ENCODE measurements at regions of chr19 and their contacts with region 1.

Region 1: GRCh38 chr19:48468775-48469288 is 337 bp upstream of the CYTH2 start:
- DNase-seq: peak; percentile 100
- H3K4me3 ChIP-seq: peak overlapping the region; percentile 49 to 85 (median 74)
- H3K27ac ChIP-seq: peak overlapping the region; percentile 94
- H3K4me1 ChIP-seq: peaks cover 8% of the 10 kb centered on the region
- H3K27me3 ChIP-seq: no peaks in the 10 kb centered on the region
- CTCF ChIP-seq: no peak
- POLR2A ChIP-seq: no peak

Region 2: DNA sequence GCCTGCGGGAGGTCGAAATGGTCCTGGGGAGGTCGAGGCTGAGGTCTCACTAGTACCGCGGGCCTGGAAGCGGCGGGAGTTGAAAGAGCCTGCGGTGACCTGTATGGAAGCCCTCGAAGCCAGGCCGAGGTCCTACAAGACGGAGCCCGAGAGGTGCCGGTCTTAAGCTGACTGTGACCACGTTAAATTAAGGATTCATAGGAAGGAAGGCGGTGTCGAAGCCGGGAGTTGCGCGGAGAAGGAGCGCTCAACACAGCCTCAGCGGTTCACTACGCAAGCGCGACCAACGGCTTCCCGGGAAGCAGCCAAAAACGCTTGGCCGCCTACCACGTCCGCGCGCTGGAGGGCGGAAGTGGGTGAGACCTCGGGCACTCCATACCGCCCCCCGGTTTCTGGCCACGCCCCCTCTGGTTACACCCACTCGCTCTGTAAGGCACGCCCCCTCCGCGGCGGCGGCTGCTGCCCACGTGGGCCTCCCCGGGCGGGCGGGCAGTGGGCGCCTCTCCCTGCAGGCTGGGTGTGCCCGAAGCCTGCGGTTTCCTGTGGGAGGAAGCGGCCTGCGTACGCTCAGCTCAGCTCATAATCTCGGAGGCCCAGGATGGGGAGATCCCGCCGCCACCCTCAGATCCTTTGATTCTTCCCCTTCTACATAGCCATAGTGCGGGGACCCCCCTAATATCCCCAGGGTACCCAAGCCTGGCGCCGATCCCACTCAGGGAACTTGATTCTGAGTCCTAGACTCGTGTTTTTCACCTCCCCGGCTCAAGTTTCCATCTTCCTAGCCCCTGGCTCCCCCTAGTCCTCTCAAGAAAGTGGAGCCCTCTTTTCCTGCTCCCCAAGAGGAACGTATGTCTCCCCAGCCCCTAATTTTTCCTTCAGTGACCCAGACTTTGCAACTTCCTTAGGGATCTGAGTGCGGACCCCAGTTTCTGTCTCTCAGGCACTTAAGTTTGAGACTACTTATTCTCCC is 146.9 kb before region 1 on chr19:
- CTCF ChIA-PET with region 1: no interaction called
- POLR2A ChIA-PET with region 1: no interaction called
- dilution Hi-C with region 1: no loop called
- intact Hi-C with region 1: loop called (anchors 2 kb)
- DNase-seq: peak; percentile 98
- H3K4me3 ChIP-seq: peak overlapping the region in 2 of 3 experiments; percentile 38 to 40
- H3K27ac ChIP-seq: peak overlapping the region; percentile 97
- H3K4me1 ChIP-seq: peaks cover 27% of the 10 kb centered on the region
- H3K27me3 ChIP-seq: no peaks in the 10 kb centered on the region
- CTCF ChIP-seq: no peak
- POLR2A ChIP-seq: peak; percentile 82

Region 3: DNA sequence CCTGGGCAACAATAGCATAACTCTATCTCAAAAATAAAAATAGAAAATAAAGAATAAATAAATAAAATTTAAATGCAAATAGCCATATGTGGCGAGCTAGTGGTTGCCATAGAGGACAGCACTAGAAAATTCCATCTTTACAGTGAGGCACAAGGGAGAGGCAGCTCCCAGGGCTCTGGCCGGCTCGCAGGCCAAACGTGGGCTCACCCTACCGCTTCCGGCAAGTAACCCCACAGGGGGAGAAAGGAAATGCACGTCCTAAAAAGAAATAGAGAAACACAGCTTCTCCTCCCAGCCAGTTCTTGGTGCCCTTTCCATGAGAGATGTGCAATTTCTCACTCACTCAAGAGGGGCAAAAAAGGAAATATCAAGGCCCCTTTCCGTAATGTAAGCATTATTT is 35.5 kb before region 1 on chr19:
- CTCF ChIA-PET with region 1: no interaction called
- POLR2A ChIA-PET with region 1: interaction called, 11 read pairs
- dilution Hi-C with region 1: no loop called
- intact Hi-C with region 1: no loop called
- DNase-seq: no peak
- H3K4me3 ChIP-seq: no peak overlapping the region
- H3K27ac ChIP-seq: no peak overlapping the region
- H3K4me1 ChIP-seq: no peaks in the 10 kb centered on the region
- H3K27me3 ChIP-seq: no peaks in the 10 kb centered on the region
- CTCF ChIP-seq: no peak
- POLR2A ChIP-seq: no peak

Region 4: GRCh38 chr19:48492925-48493717 is 24.3 kb after region 1 on chr19:
- CTCF ChIA-PET with region 1: interaction called, 9 read pairs
- POLR2A ChIA-PET with region 1: interaction called, 4 read pairs
- dilution Hi-C with region 1: no loop called
- intact Hi-C with region 1: loop called (anchors 2 kb)
- DNase-seq: peak; percentile 97
- H3K4me3 ChIP-seq: peak overlapping the region; percentile 57 to 69 (median 62)
- H3K27ac ChIP-seq: no peak overlapping the region
- H3K4me1 ChIP-seq: peaks cover 16% of the 10 kb centered on the region
- H3K27me3 ChIP-seq: peaks cover 3 to 11% of the 10 kb centered on the region in 2 experiments
- CTCF ChIP-seq: no peak
- POLR2A ChIP-seq: peak; percentile 73